ENCODE measurements at regions of chr14 and their contacts with region 1.

Region 1: DNA sequence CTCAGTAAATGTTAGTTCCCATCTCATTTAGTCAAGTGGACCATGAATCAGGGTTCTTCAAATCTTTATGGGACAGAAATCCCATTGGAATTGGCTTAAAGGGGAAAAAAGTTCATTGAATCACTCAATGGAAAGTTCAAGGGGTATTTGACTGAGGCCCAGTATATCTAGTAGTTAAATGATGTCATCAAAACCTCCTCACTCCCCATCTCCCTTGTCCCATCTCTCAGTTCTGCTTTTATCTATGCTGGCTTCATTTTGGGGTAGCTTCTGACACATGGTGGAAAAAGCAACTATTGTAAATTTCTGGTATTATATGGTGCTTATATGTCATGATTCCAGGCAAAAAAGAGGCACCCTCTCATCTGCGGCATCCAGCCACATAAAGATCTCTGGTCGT is 51.9 kb downstream of the DAAM1 start:
- DNase-seq: peak; percentile 45
- ATAC-seq: peak; percentile 87
- H3K4me3 ChIP-seq: no peak overlapping the region
- H3K27ac ChIP-seq: no peak overlapping the region
- H3K4me1 ChIP-seq: peaks cover 22% of the 10 kb centered on the region
- H3K27me3 ChIP-seq: no peaks in the 10 kb centered on the region
- CTCF ChIP-seq: no peak
- EP300 ChIP-seq: peak; percentile 61 to 82; a peak in 3 of 4 replicates
- POLR2A ChIP-seq: no peak
- RAD21 ChIP-seq: 0 out of 2 replicates have a peak, but pooled peaks have one; percentile 14

Region 2: GRCh38 chr14:59116984-59117415 is 123.4 kb before region 1 on chr14:
- CTCF ChIA-PET with region 1: no interaction called
- POLR2A ChIA-PET with region 1: no interaction called
- RAD21 ChIA-PET with region 1: no interaction called
- SMC1A ChIA-PET with region 1: no interaction called
- in situ Hi-C with region 1: no loop called
- intact Hi-C with region 1: no loop called
- DNase-seq: peak; percentile 44
- ATAC-seq: peak; percentile 95
- H3K4me3 ChIP-seq: no peak overlapping the region
- H3K27ac ChIP-seq: no peak overlapping the region
- H3K4me1 ChIP-seq: no peaks in the 10 kb centered on the region
- H3K27me3 ChIP-seq: no peaks in the 10 kb centered on the region; a peak in 1 of 4 replicates
- CTCF ChIP-seq: no peak
- EP300 ChIP-seq: peak; percentile 18 to 79; a peak in 3 of 4 replicates
- POLR2A ChIP-seq: no peak
- RAD21 ChIP-seq: no peak

Region 3: GRCh38 chr14:59208224-59208814 is 32.0 kb before region 1 on chr14:
- CTCF ChIA-PET with region 1: interaction called, 4 read pairs
- POLR2A ChIA-PET with region 1: interaction called, 10 read pairs
- RAD21 ChIA-PET with region 1: interaction called, 8 read pairs
- SMC1A ChIA-PET with region 1: interaction called, 24 read pairs
- in situ Hi-C with region 1: no loop called
- intact Hi-C with region 1: loop called (anchors 2 kb)
- DNase-seq: peak; percentile 65
- ATAC-seq: peak; percentile 84
- H3K4me3 ChIP-seq: no peak overlapping the region
- H3K27ac ChIP-seq: peak overlapping the region; percentile 62; the same call in 1 of the 2 replicates
- H3K4me1 ChIP-seq: peaks cover 8% of the 10 kb centered on the region; the same call in 1 of the 2 replicates
- H3K27me3 ChIP-seq: no peaks in the 10 kb centered on the region
- CTCF ChIP-seq: no peak
- EP300 ChIP-seq: no peak
- POLR2A ChIP-seq: no peak
- RAD21 ChIP-seq: no peak

Region 4: DNA sequence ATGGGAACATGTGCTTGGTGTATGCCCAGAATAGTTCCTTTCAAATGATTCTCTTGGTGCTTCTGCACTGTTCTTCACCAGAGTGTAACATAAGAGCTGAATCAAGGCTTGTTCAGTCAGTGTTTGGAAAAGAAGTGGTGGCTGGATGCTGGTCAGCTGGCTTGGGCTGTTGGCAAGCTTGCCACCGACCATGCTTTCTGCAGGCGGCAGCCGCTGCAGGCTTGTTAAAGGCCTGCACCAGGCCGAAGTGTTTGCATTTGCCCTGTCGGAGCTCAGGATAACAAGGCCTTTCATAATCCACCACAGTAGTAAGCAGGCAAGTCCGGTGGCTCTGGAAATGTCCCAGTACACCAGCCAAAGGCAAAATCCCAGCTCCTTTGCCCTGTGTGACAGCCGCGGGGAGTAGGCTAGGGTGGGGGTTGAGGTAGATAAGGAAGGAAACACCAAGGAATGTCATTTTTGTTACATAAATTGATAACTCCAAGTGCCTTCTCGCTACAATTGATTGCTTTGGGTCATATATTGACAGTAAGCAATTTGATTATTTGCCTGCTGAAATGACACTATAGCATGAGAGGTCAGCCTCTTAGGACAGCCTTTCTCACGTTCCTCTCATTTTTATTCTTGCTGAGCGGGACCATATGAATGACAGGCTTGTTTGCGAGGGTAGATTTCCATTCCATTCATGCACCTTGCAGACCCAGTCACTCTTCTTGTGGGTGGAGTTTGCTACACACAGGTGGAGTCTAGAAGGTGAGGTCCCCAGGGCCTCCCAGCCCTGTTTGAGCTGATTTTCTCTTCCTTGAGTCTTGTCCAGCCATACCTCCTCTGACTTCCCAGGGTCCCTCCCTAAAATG is 24.8 kb before region 1 on chr14:
- CTCF ChIA-PET with region 1: interaction called, 4 read pairs
- POLR2A ChIA-PET with region 1: interaction called, 10 read pairs
- RAD21 ChIA-PET with region 1: interaction called, 10 read pairs
- SMC1A ChIA-PET with region 1: interaction called, 24 read pairs
- in situ Hi-C with region 1: no loop called
- intact Hi-C with region 1: no loop called
- DNase-seq: no peak
- ATAC-seq: peak; percentile 19
- H3K4me3 ChIP-seq: 0 out of 2 replicates have a peak overlapping the region, but pooled peaks have one; percentile 11
- H3K27ac ChIP-seq: peak overlapping the region; percentile 59
- H3K4me1 ChIP-seq: peaks cover 15% of the 10 kb centered on the region
- H3K27me3 ChIP-seq: no peaks in the 10 kb centered on the region
- CTCF ChIP-seq: no peak
- EP300 ChIP-seq: no peak
- POLR2A ChIP-seq: no peak
- RAD21 ChIP-seq: no peak

Measured in GM12878 (cell line).